A673 (cell line): ENCODE measurements at regions of chr1 and their contacts with region 1.

Region 1: GRCh38 chr1:199684686-199685273 is 342.7 kb upstream of the NR5A2 start:
- DNase-seq: peak; percentile 84
- H3K4me3 ChIP-seq: no peak overlapping the region
- H3K27ac ChIP-seq: no peak overlapping the region
- H3K4me1 ChIP-seq: peaks cover 89% of the 10 kb centered on the region
- H3K27me3 ChIP-seq: no peaks in the 10 kb centered on the region
- CTCF ChIP-seq: peak; percentile 90

Region 2: DNA sequence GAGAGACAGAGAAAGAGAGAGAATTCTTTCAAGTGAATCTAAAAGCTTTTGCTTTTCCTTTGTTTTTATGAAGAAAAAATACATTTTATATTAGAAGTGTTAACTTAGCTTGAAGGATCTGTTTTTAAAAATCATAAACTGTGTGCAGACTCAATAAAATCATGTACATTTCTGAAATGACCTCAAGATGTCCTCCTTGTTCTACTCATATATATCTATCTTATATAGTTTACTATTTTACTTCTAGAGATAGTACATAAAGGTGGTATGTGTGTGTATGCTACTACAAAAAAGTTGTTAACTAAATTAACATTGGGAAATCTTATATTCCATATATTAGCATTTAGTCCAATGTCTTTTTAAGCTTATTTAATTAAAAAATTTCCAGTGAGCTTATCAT is 928.3 kb before region 1 on chr1:
- CTCF ChIA-PET with region 1: no interaction called
- POLR2A ChIA-PET with region 1: no interaction called
- intact Hi-C with region 1: loop called (anchors 5 kb)
- DNase-seq: peak; percentile 67
- H3K4me3 ChIP-seq: no peak overlapping the region
- H3K27ac ChIP-seq: peak overlapping the region; percentile 29
- H3K4me1 ChIP-seq: peaks cover 27% of the 10 kb centered on the region
- H3K27me3 ChIP-seq: no peaks in the 10 kb centered on the region
- CTCF ChIP-seq: peak; percentile 62

Region 3: GRCh38 chr1:199735660-199736059 is 50.9 kb after region 1 on chr1:
- CTCF ChIA-PET with region 1: interaction called, 3 read pairs
- POLR2A ChIA-PET with region 1: no interaction called
- intact Hi-C with region 1: loop called (anchors 5 kb)
- DNase-seq: no peak
- H3K4me3 ChIP-seq: no peak overlapping the region
- H3K27ac ChIP-seq: no peak overlapping the region
- H3K4me1 ChIP-seq: peaks cover 36% of the 10 kb centered on the region
- H3K27me3 ChIP-seq: peaks cover 59% of the 10 kb centered on the region
- CTCF ChIP-seq: no peak

Region 4: DNA sequence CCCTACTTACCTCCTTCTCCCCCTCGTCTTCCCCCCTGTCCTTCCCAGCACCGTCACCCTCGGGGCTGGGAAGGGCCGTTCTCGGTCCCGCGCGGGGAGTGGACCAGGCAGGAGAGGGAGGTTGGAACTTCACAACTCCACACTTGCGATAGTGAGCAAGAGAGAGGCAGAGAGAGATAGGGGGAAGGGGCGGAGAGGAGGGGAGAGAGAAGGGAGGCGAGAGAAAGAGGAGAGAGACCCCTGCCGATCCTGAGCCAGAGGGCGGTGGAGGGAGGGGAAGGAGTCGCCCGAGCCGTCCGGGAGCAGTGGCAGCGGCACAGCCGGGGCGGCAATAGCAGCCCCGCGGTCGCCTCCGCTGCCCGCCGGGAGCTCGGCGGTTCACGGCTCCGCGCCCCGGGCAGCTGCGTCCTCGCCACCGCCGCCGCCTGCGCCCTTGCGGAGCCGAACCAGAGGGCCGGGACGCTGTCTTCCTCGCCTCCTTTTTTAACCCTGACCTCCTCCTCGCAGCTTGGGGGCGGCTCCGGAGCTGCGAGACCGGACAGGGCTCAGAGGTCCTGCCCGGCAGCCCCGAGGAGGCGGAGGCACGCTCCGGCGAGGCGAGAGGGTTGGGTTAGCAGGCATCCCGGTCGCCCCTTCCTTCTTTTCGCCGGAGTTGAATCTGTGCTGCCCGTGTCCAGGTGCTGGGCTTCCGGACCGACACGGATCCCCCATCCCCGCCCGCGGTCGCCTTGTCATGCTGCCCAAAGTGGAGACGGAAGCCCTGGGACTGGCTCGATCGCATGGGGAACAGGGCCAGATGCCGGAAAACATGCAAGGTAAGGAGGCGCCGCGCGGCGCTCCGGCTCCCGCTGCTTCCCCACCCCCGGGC is 354.4 kb after region 1 on chr1:
- CTCF ChIA-PET with region 1: no interaction called
- POLR2A ChIA-PET with region 1: no interaction called
- intact Hi-C with region 1: loop called (anchors 10 kb)
- DNase-seq: no peak
- H3K4me3 ChIP-seq: peak overlapping the region; percentile 34
- H3K27ac ChIP-seq: no peak overlapping the region
- H3K4me1 ChIP-seq: peaks cover 13% of the 10 kb centered on the region
- H3K27me3 ChIP-seq: peaks cover 99% of the 10 kb centered on the region
- CTCF ChIP-seq: no peak

Region 5: DNA sequence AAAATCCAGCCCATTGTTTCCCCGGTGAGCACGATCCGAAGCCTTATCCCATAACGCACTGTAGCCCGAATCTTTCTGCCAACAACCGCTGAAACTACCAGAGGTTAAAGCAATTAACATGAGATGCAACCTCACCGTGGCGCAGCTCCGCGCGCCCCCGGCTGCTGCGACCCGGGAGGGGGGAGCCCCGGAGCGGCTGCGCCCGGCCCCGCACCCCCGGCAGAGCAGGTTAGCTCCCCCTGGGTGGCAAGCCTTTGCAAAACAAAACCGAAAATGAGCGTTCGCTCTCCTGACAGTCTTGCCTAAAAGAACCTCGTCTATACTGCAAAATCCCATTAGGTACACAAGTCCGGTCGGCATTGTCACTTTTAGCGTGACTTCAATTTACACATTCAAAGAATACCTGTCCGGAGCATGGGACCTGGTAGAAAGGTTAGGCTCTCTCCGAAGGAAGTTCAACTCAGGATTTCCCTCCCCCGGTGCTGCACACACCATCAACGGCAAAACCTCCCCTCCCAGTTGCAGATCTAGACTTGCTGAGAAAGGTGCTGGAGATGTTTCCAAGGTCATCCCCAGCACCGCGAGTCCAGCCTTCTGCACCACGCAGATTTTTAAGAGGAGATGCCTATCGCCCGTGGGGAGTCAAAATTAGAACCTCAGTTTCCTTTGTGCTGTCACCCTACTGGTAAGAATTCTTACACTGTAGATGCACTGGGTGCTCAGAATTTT is 617.6 kb after region 1 on chr1:
- CTCF ChIA-PET with region 1: no interaction called
- POLR2A ChIA-PET with region 1: no interaction called
- intact Hi-C with region 1: loop called (anchors 2 kb)
- DNase-seq: peak; percentile 33
- H3K4me3 ChIP-seq: peak overlapping the region; percentile 69
- H3K27ac ChIP-seq: no peak overlapping the region
- H3K4me1 ChIP-seq: peaks cover 6% of the 10 kb centered on the region
- H3K27me3 ChIP-seq: no peaks in the 10 kb centered on the region
- CTCF ChIP-seq: no peak; the same call in 1 of the 2 replicates

Region 6: DNA sequence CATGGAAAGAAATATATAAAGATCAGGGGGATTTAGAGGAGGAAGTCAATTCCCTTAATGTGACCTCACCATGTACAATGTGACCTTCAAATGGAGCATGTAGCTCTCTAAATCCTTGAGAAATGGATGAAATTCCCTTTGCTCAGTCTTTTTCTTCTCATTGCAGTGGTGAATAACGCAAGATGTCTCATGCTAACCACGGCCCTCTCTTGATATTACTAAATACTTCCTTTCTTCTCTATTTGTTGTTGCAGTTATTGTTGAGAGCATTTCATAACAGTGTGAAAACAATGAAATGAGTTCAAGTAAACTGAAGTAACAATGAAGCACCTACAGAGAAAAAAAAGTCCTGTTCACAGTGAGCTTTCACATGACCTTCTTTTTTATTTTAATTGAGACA is 669.5 kb after region 1 on chr1:
- CTCF ChIA-PET with region 1: no interaction called
- POLR2A ChIA-PET with region 1: no interaction called
- intact Hi-C with region 1: no loop called
- DNase-seq: no peak
- H3K4me3 ChIP-seq: no peak overlapping the region
- H3K27ac ChIP-seq: no peak overlapping the region
- H3K4me1 ChIP-seq: no peaks in the 10 kb centered on the region
- H3K27me3 ChIP-seq: no peaks in the 10 kb centered on the region
- CTCF ChIP-seq: no peak

Region 7: GRCh38 chr1:200510228-200510623 is 825.4 kb after region 1 on chr1:
- CTCF ChIA-PET with region 1: no interaction called
- POLR2A ChIA-PET with region 1: no interaction called
- intact Hi-C with region 1: loop called (anchors 5 kb)
- DNase-seq: peak; percentile 89
- H3K4me3 ChIP-seq: no peak overlapping the region
- H3K27ac ChIP-seq: no peak overlapping the region
- H3K4me1 ChIP-seq: no peaks in the 10 kb centered on the region
- H3K27me3 ChIP-seq: peaks cover 3% of the 10 kb centered on the region
- CTCF ChIP-seq: peak; percentile 96

Region 8: GRCh38 chr1:200938955-200939354 is 1254.2 kb after region 1 on chr1:
- CTCF ChIA-PET with region 1: no interaction called
- POLR2A ChIA-PET with region 1: no interaction called
- intact Hi-C with region 1: no loop called
- DNase-seq: no peak
- H3K4me3 ChIP-seq: no peak overlapping the region
- H3K27ac ChIP-seq: no peak overlapping the region
- H3K4me1 ChIP-seq: no peaks in the 10 kb centered on the region
- H3K27me3 ChIP-seq: no peaks in the 10 kb centered on the region
- CTCF ChIP-seq: no peak